Testis (tissue), 5 donors: ENCODE measurements at regions of chr17 and their contacts with region 1.

Region 1: GRCh38 chr17:7136266-7136877 is 21.8 kb upstream of the ASGR2 start:
- DNase-seq: peak; percentile 89
- H3K4me3 ChIP-seq: no peak overlapping the region
- H3K27ac ChIP-seq: no peak overlapping the region
- H3K4me1 ChIP-seq: no peaks in the 10 kb centered on the region
- H3K27me3 ChIP-seq: no peaks in the 10 kb centered on the region
- CTCF ChIP-seq: peak; percentile 90 to 96 (median 95)
- POLR2A ChIP-seq: no peak

Region 2: DNA sequence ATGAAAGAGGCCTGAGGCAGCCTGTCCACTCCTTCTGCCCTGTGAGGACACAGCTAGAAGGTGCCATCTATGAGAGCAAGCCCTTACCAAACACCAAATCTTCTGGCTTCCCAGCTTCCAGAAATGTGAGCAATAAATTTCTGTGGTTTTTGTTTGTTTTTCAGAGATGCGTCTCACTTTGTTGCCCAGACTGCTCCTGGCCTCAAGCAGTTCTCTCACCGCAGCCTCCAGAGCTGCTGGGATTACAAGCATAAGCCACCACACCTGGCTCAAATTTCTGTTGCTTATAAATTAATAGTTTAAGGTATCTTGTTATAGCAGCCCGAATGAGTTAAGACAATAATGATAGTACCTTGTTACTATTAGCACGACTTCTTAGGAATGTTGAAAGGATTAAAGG is 80.0 kb before region 1 on chr17:
- intact Hi-C with region 1: loop called (anchors 2 kb)
- DNase-seq: no peak
- H3K4me3 ChIP-seq: no peak overlapping the region
- H3K27ac ChIP-seq: no peak overlapping the region
- H3K4me1 ChIP-seq: no peaks in the 10 kb centered on the region
- H3K27me3 ChIP-seq: no peaks in the 10 kb centered on the region
- CTCF ChIP-seq: no peak
- POLR2A ChIP-seq: no peak